ENCODE measurements at regions of chr13 and their contacts with region 1.

Region 1: GRCh38 chr13:51814825-51815650 is 11.1 kb upstream of the DHRS12 start:
- DNase-seq: peak; percentile 79
- ATAC-seq: peak; percentile 82
- H3K4me3 ChIP-seq: peak overlapping the region; percentile 68
- H3K27ac ChIP-seq: no peak overlapping the region
- H3K4me1 ChIP-seq: peaks cover 6% of the 10 kb centered on the region; the same call in 1 of the 2 replicates
- H3K27me3 ChIP-seq: no peaks in the 10 kb centered on the region
- CTCF ChIP-seq: peak; percentile 75

Region 2: GRCh38 chr13:51856027-51856736 is 41.1 kb after region 1 on chr13:
- CTCF ChIA-PET with region 1: no interaction called
- POLR2A ChIA-PET with region 1: interaction called, 3 read pairs
- intact Hi-C with region 1: loop called (anchors 5 kb)
- DNase-seq: peak; percentile 84
- ATAC-seq: peak; percentile 27
- H3K4me3 ChIP-seq: no peak overlapping the region
- H3K27ac ChIP-seq: peak overlapping the region; percentile 36
- H3K4me1 ChIP-seq: peaks cover 44% of the 10 kb centered on the region
- H3K27me3 ChIP-seq: no peaks in the 10 kb centered on the region
- CTCF ChIP-seq: no peak

Region 3: DNA sequence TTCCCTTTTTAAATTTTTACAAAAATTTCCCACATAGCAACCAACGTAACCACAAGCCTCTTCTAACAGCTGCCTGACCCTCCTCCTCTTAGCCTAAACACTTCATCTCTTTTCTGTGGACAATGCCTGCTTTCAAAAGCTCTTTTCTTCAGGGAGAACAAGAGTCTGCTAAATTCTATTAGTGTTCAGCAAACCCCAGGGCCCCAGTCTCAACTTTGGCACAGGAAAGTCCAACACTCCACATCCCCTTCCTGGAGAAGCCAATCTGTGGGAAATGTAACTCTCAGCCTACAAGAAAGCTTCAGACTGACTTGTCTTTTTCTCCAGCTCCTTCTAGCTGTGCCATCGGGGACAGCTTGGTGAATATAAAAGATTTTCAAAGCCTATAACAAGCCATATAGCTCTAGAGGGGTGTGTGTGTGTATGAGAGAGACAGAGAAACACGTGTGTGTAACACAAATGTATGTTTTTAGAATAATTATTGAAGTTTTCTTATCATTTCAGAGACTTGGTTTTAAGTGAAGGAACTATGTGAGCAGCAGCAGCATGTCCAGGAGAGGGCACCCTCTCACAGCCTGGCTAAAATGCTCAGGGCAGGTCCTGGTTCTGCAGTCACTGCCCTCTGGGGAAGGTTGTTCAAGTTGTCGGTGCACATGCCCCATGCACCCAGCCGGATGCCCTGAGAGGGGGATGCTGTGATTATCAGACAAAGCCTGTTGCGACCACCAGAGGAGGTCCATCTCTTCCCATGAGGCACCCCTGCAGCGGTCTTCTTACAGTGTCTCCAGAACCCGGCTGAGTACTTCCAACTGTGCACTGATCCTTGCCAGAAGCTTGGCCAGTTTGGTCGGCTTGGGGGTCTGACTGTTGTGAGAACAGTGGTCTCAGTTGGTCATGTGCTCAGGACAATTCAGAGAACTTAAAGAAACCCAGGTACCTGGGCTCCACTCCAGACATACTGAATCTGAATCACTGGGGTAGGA is 81.2 kb after region 1 on chr13:
- CTCF ChIA-PET with region 1: no interaction called
- POLR2A ChIA-PET with region 1: no interaction called
- intact Hi-C with region 1: loop called (anchors 5 kb)
- DNase-seq: peak; percentile 57
- ATAC-seq: peak; percentile 96
- H3K4me3 ChIP-seq: no peak overlapping the region
- H3K27ac ChIP-seq: no peak overlapping the region
- H3K4me1 ChIP-seq: no peaks in the 10 kb centered on the region; the same call in 1 of the 2 replicates
- H3K27me3 ChIP-seq: no peaks in the 10 kb centered on the region
- CTCF ChIP-seq: peak; percentile 79

Region 4: GRCh38 chr13:51988988-51989618 is 174.1 kb after region 1 on chr13:
- CTCF ChIA-PET with region 1: no interaction called
- POLR2A ChIA-PET with region 1: no interaction called
- intact Hi-C with region 1: no loop called
- DNase-seq: no peak
- ATAC-seq: no peak
- H3K4me3 ChIP-seq: no peak overlapping the region
- H3K27ac ChIP-seq: no peak overlapping the region
- H3K4me1 ChIP-seq: no peaks in the 10 kb centered on the region
- H3K27me3 ChIP-seq: no peaks in the 10 kb centered on the region
- CTCF ChIP-seq: no peak

Measured in PC-3 (cell line).